CD4-positive, alpha-beta T cell (primary cell): ENCODE measurements at regions of chr22 and their contacts with region 1.

Region 1: GRCh38 chr22:44701824-44702478 is at the start of gene PRR5:
- DNase-seq: peak; percentile 63 to 94 (median 80)
- ATAC-seq: peak; percentile 89
- H3K4me3 ChIP-seq: peak within 1 kb of the TSS; percentile 56
- H3K4me3 Mint-ChIP-seq: peak within 1 kb of the TSS; percentile 81
- H3K27ac ChIP-seq: peak within 1 kb of the TSS; percentile 65 to 73
- H3K27ac Mint-ChIP-seq: peak within 1 kb of the TSS; percentile 56
- H3K4me1 ChIP-seq: peaks cover 55% of the 10 kb centered on the region
- H3K4me1 Mint-ChIP-seq: peaks cover 12% of the 10 kb centered on the region
- H3K27me3 ChIP-seq: no peaks in the 10 kb centered on the region
- H3K27me3 Mint-ChIP-seq: no peaks in the 10 kb centered on the region
- CTCF ChIP-seq: no peak
- total RNA-seq, gene PRR5: 29.0 to 31.6 TPM

Region 2: DNA sequence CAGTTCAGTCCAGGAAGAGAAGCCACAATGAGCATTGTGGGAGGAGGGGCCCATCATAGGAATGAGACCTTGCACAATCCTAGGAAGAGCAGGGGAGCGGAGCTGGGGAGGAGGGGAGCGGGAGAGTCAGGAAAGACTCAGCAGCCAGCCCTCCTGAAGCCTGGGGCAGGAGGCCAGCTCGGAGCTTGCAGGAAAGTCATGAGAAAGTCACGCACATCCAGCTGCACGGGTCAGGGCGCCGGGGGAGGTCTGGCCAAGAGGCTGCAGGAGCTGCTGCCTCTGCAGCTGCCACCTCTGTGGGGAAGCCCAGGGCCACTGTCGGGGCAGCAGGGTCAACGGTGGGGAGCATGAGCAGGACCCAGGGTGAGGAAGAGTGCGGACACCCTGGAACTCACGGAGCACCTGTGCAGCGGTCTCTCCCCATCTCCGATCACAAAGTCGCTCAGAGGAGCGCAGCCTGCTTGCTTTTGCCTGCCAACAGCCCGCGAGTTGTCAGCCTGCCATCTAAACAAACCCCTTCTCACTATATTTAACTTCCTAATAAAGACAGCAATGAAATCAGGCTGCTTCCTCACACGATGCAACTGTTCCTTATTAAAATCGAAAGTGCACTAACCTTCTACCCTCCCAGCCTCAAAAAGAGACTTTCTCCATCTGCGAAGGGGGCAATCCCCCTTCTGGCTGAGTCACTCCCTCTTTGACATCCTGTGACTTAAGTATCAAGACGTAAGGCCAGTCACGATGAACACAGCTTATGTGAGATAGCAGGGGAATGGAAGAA is 151.1 kb before region 1 on chr22:
- CTCF ChIA-PET with region 1: no interaction called
- POLR2A ChIA-PET with region 1: no interaction called
- intact Hi-C with region 1: no loop called
- DNase-seq: peak in 3 of 14 experiments; percentile 21 to 70 (median 49)
- ATAC-seq: no peak
- H3K4me3 ChIP-seq: no peak overlapping the region
- H3K4me3 Mint-ChIP-seq: no peak overlapping the region
- H3K27ac ChIP-seq: no peak overlapping the region
- H3K27ac Mint-ChIP-seq: no peak overlapping the region
- H3K4me1 ChIP-seq: peaks cover 7% of the 10 kb centered on the region
- H3K4me1 Mint-ChIP-seq: no peaks in the 10 kb centered on the region
- H3K27me3 ChIP-seq: peaks cover 2 to 5% of the 10 kb centered on the region in 2 experiments
- H3K27me3 Mint-ChIP-seq: peaks cover 26% of the 10 kb centered on the region
- CTCF ChIP-seq: no peak

Region 3: DNA sequence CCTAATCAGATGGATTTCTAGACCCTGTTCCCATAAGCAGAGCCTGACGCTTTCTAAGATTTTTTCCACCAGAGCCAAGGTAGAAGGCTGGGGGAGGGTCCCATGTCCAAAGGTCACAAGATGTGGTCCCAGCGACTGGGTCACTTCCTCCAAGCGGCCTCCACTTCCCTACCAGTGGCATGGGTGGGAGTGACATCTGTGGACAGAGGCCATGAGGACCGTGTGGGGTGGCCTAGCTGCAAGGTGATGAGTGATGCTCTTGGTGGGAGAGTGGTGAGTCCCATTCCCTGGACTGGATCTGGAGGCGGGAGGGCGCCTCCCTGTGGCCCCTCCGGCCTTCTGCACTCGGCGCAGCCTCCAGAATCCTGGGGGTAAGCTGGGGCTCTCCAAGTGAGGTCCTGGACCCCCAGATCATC is 32.4 kb before region 1 on chr22:
- CTCF ChIA-PET with region 1: no interaction called
- POLR2A ChIA-PET with region 1: interaction called, 5 read pairs
- intact Hi-C with region 1: loop called in 1 of 2 experiments (anchors 1 kb)
- DNase-seq: peak in 2 of 14 experiments; percentile 29 to 47
- ATAC-seq: no peak
- H3K4me3 ChIP-seq: peak overlapping the region; percentile 69
- H3K4me3 Mint-ChIP-seq: peak overlapping the region; percentile 84
- H3K27ac ChIP-seq: no peak overlapping the region
- H3K27ac Mint-ChIP-seq: peak overlapping the region; percentile 57
- H3K4me1 ChIP-seq: peaks cover 71% of the 10 kb centered on the region
- H3K4me1 Mint-ChIP-seq: peaks cover 59% of the 10 kb centered on the region
- H3K27me3 ChIP-seq: no peaks in the 10 kb centered on the region
- H3K27me3 Mint-ChIP-seq: no peaks in the 10 kb centered on the region
- CTCF ChIP-seq: no peak

Region 4: DNA sequence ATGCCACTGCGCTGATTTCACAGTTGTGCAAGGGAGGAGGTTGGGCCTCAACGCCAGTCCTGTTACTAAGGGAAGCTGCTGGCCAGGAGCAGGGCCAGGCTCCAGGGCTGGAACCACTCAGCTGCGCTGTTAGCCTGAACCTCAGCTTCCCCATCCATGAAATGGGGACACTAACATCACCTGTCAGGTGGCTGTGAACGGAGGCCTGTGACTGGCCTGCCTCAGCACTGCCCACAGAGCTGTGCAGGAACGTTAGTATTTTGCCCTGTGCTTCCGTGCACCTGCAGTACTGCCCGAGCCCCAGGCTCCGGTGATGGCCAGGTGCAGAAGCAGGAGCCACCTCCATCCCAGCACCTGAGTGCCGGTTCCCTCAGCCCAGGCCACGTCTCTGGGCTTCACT is 20.2 kb after region 1 on chr22:
- CTCF ChIA-PET with region 1: no interaction called
- POLR2A ChIA-PET with region 1: no interaction called
- intact Hi-C with region 1: no loop called
- DNase-seq: no peak
- ATAC-seq: no peak
- H3K4me3 ChIP-seq: no peak overlapping the region
- H3K4me3 Mint-ChIP-seq: no peak overlapping the region
- H3K27ac ChIP-seq: no peak overlapping the region
- H3K27ac Mint-ChIP-seq: no peak overlapping the region
- H3K4me1 ChIP-seq: peaks cover 17% of the 10 kb centered on the region
- H3K4me1 Mint-ChIP-seq: peaks cover 6% of the 10 kb centered on the region
- H3K27me3 ChIP-seq: no peaks in the 10 kb centered on the region
- H3K27me3 Mint-ChIP-seq: no peaks in the 10 kb centered on the region
- CTCF ChIP-seq: no peak

Region 5: GRCh38 chr22:44735540-44736488 is 33.9 kb after region 1 on chr22:
- CTCF ChIA-PET with region 1: interaction called, 6 read pairs
- POLR2A ChIA-PET with region 1: no interaction called
- intact Hi-C with region 1: loop called (anchors 1 kb)
- DNase-seq: peak; percentile 71 to 91 (median 81)
- ATAC-seq: peak; percentile 81
- H3K4me3 ChIP-seq: no peak overlapping the region
- H3K4me3 Mint-ChIP-seq: no peak overlapping the region
- H3K27ac ChIP-seq: no peak overlapping the region
- H3K27ac Mint-ChIP-seq: no peak overlapping the region
- H3K4me1 ChIP-seq: peaks cover 7% of the 10 kb centered on the region
- H3K4me1 Mint-ChIP-seq: peaks cover 4% of the 10 kb centered on the region
- H3K27me3 ChIP-seq: no peaks in the 10 kb centered on the region
- H3K27me3 Mint-ChIP-seq: no peaks in the 10 kb centered on the region
- CTCF ChIP-seq: peak; percentile 98

Region 6: DNA sequence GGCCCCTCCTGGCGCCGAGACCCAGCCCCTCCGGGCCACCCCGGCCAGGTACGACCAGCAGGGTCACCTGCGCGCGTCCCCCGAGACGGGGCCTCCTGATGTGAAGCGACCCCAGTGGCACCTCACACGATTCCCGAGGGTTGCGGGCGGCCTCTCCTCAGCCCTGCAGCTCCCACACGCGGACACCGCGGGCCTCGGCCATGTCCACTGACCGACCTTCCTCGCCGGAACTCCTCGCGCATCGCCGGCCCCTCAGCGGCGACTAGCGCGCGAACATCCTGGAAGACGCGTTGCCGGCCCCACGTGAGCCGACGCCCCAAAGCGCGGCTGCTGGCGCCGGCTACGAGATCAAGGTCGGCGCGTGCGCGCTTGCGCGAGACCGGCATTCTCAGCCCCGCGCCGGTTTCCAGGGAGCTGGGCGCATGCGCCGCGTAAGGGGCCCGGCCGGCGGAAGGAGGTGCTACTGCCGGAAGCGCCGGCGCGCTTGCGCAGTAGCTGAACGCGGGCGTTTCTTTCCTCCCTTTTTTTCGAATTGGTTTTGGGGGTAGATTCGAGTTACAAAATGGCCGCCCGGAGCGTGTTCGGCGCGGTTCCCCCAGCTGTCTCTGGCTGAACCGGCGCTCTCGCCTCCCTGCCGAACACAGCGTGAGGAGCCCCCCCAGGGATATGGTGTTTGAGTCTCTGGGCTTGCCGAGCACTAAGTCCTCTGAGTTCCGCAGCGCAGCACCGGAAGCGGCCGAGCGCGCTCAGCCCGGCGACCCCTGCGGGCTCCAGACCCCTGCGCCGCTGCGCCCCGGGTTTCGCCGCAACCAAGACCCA is 461.7 kb after region 1 on chr22 and contains the start of gene NUP50:
- CTCF ChIA-PET with region 1: no interaction called
- POLR2A ChIA-PET with region 1: no interaction called
- intact Hi-C with region 1: loop called in 1 of 2 experiments (anchors 10 kb)
- DNase-seq: peak; percentile 89 to 100 (median 96)
- ATAC-seq: peak; percentile 77
- H3K4me3 ChIP-seq: peak within 1 kb of the TSS; percentile 80
- H3K4me3 Mint-ChIP-seq: peak within 1 kb of the TSS; percentile 97
- H3K27ac ChIP-seq: peak within 1 kb of the TSS; percentile 84 to 85
- H3K27ac Mint-ChIP-seq: peak within 1 kb of the TSS; percentile 93
- H3K4me1 ChIP-seq: peaks cover 56% of the 10 kb centered on the region
- H3K4me1 Mint-ChIP-seq: peaks cover 71% of the 10 kb centered on the region
- H3K27me3 ChIP-seq: no peaks in the 10 kb centered on the region
- H3K27me3 Mint-ChIP-seq: no peaks in the 10 kb centered on the region
- CTCF ChIP-seq: no peak
- total RNA-seq, gene NUP50: 141 TPM

Region 7: GRCh38 chr22:45309472-45310227 is 607.7 kb after region 1 on chr22 and contains the start of gene FAM118A:
- CTCF ChIA-PET with region 1: no interaction called
- POLR2A ChIA-PET with region 1: no interaction called
- intact Hi-C with region 1: loop called in 1 of 2 experiments (anchors 5 kb)
- DNase-seq: peak; percentile 91 to 99 (median 96)
- ATAC-seq: peak; percentile 84
- H3K4me3 ChIP-seq: peak within 1 kb of the TSS; percentile 93
- H3K4me3 Mint-ChIP-seq: peak within 1 kb of the TSS; percentile 85
- H3K27ac ChIP-seq: peak within 1 kb of the TSS; percentile 77 to 87
- H3K27ac Mint-ChIP-seq: peak within 1 kb of the TSS; percentile 95
- H3K4me1 ChIP-seq: peaks cover 55% of the 10 kb centered on the region
- H3K4me1 Mint-ChIP-seq: peaks cover 49% of the 10 kb centered on the region
- H3K27me3 ChIP-seq: no peaks in the 10 kb centered on the region
- H3K27me3 Mint-ChIP-seq: no peaks in the 10 kb centered on the region
- CTCF ChIP-seq: no peak
- total RNA-seq, gene FAM118A: 159 to 161 TPM